ENCODE measurements at regions of chr12 and their contacts with region 1.

Region 1: GRCh38 chr12:14207905-14208551 is 157.5 kb upstream of the ATF7IP start:
- DNase-seq: no peak
- ATAC-seq: no peak
- H3K4me3 ChIP-seq: no peak overlapping the region
- H3K27ac ChIP-seq: no peak overlapping the region
- H3K4me1 ChIP-seq: no peaks in the 10 kb centered on the region
- H3K27me3 ChIP-seq: peaks cover 0 to 2% (median 0%) of the 10 kb centered on the region in 3 donors
- CTCF ChIP-seq: no peak

Region 2: DNA sequence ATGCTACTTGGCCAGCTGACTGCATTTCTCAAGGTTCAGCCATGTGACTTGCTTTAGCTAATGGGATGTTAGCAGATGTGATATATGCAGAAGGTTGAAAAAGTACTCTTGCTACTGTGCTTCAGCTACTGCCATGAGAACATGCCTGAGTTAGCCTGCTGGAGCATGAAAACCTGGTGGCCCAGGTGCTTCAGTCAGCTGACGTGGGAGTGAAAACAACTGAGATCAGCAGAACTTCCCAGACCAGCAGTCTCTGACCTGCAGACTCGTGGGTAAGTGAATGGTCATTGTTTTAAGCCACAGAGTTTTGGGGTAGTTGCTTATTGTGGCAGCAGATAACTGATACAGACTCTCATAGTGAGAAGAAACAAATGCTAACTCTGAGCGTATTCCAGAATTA is 108.0 kb before region 1 on chr12:
- intact Hi-C with region 1: no loop called
- DNase-seq: no peak
- ATAC-seq: no peak
- H3K4me3 ChIP-seq: no peak overlapping the region
- H3K27ac ChIP-seq: no peak overlapping the region
- H3K4me1 ChIP-seq: no peaks in the 10 kb centered on the region
- H3K27me3 ChIP-seq: no peaks in the 10 kb centered on the region
- CTCF ChIP-seq: no peak

Region 3: DNA sequence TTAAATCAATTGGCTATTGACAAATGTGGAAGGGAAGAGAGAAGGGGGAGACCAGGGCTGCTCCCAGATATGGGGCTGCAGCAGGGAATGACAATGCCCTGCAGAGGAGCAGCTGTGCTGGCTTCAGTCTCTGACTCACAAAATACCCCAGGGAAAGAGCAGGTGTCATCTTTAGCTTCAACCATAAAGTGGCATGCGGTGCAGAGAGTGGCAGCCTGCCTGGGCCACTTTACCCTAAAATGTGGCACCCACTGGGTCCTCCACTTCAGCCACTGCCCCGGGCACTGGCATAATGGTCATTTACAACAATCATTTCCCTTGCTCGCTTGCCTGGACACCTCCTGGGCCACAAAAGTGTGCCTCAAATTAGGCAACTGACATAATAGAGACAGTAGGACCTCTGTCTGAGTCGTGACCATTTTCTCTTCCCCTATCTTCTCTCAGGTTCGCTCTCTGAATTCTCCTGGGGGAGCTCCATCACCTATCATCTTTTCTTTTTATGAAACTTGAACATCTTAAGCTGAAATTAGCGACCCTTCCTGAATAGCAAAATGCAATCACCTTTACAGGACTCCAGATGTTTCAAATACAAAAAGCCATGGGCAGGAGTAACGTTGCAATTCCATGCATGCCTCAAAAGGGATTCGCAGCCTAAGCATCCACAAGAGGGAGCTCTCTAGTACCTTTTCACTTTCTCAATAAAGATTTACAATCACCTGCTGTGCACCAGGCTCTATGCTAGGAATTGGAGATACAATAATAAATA is 22.4 kb before region 1 on chr12:
- intact Hi-C with region 1: loop called in 1 of 2 experiments (anchors 1 kb)
- DNase-seq: no peak
- ATAC-seq: peak in 1 of 4 donors; percentile 47
- H3K4me3 ChIP-seq: no peak overlapping the region
- H3K27ac ChIP-seq: no peak overlapping the region
- H3K4me1 ChIP-seq: no peaks in the 10 kb centered on the region
- H3K27me3 ChIP-seq: no peaks in the 10 kb centered on the region
- CTCF ChIP-seq: peak; percentile 42

Region 4: DNA sequence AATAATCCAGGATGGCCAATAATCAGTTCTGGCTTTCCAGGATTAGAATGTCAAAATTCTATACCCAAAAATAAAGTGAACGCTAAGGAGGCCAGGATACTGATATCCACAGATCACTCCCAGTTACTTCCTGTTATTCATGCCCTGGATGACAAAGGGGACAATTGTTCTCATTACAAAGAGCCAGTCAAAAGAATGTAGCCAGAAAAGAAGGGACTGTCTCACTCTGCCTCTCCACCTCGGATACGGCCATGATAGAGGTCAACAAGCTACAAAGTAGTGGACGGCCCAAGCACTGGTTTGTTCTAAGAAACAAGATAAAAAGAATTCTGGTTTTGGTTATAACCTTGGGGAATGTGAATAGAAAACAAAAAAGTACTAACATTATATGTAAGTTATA is 41.3 kb after region 1 on chr12:
- intact Hi-C with region 1: no loop called
- DNase-seq: no peak
- ATAC-seq: no peak
- H3K4me3 ChIP-seq: no peak overlapping the region
- H3K27ac ChIP-seq: no peak overlapping the region
- H3K4me1 ChIP-seq: no peaks in the 10 kb centered on the region
- H3K27me3 ChIP-seq: no peaks in the 10 kb centered on the region
- CTCF ChIP-seq: no peak